Mucosa of descending colon (tissue), 3 donors: ENCODE measurements at regions of chr6 and their contacts with region 1.

Region 1: GRCh38 chr6:70369332-70369950 is 43.9 kb upstream of the FAM135A start:
- DNase-seq: peak in 2 of 3 donors; percentile 64 to 79
- ATAC-seq: peak; percentile 95
- H3K4me3 ChIP-seq: no peak overlapping the region
- H3K4me1 ChIP-seq: no peaks in the 10 kb centered on the region
- CTCF ChIP-seq: peak; percentile 89

Region 2: DNA sequence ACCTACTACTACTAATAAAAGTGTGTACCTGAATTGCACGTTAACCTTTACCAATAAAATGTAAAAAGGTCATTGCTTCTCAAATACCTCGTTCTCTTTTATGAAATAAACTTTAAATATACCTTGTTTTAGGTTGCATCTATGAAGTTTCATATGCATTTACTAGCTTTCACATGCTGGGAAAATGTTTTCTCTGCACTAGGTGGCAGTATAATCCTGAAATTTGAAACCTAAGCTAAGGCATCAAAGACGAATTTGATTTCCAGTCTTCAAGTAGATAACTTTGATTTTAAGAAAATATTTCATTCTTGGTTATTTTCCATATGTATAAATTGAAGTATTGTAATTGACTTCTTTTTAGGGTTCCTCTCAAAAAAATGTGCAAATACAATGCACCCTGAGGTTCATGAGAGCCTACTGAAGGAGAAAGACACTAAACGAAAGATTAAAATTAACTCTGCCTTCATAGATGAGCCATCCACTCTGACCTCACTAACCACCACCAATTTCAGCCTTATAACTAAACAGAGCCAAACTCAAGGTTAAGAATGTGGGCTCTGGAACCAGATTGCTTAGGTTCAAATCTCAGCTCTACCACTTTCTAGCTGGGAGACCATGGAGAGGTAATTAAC is 59.3 kb before region 1 on chr6:
- intact Hi-C with region 1: loop called in 1 of 2 experiments (anchors 5 kb)
- DNase-seq: peak in 1 of 3 donors; percentile 59
- ATAC-seq: peak; percentile 51
- H3K4me3 ChIP-seq: no peak overlapping the region
- H3K4me1 ChIP-seq: no peaks in the 10 kb centered on the region
- CTCF ChIP-seq: peak; percentile 27

Region 3: DNA sequence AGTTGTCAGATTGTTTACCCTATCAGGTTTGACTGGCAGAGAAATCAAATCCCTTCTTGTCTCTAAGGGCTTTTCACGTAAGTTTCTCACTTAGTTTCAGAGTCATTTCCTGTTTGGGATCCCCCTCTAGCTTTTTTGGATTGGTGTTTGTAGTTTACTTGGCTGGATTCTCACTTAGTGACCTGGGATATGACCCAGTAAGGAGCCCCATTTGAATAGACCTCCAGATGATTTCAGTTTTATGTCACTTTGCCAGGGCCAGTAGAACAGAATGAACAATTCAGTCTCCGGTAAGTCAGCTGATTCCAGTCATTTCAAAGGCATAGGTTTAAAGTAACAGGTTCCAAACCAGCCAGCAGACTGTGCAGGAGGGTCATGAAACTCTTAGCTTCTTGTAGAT is 52.1 kb after region 1 on chr6:
- intact Hi-C with region 1: loop called in 1 of 2 experiments (anchors 10 kb)
- DNase-seq: no peak
- ATAC-seq: no peak
- H3K4me3 ChIP-seq: no peak overlapping the region
- H3K4me1 ChIP-seq: peaks cover 5% of the 10 kb centered on the region
- CTCF ChIP-seq: no peak

Region 4: DNA sequence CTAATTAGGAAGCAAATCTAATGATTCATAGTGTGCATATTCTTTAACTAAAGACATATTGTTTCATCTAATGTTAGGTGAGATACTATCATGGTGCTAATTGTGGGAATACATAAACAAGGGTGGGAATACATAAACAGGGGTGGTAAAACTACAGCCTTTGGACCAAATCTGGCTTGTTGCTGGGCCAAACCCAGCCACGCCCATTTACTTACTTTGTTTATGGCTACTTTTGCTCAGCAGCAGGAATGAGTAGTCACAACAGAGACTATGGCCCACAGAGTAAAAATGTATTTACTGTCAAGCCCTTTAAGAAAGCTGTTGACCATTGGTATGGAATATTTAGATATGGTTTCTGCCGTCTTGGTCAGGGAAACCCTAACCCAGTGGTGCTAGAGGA is 75.6 kb after region 1 on chr6:
- intact Hi-C with region 1: no loop called
- DNase-seq: peak in 1 of 3 donors; percentile 33
- ATAC-seq: peak; percentile 98
- H3K4me3 ChIP-seq: no peak overlapping the region
- H3K4me1 ChIP-seq: no peaks in the 10 kb centered on the region
- CTCF ChIP-seq: no peak